PC-3 (cell line): ENCODE measurements at regions of chr17 and their contacts with region 1.

Region 1: DNA sequence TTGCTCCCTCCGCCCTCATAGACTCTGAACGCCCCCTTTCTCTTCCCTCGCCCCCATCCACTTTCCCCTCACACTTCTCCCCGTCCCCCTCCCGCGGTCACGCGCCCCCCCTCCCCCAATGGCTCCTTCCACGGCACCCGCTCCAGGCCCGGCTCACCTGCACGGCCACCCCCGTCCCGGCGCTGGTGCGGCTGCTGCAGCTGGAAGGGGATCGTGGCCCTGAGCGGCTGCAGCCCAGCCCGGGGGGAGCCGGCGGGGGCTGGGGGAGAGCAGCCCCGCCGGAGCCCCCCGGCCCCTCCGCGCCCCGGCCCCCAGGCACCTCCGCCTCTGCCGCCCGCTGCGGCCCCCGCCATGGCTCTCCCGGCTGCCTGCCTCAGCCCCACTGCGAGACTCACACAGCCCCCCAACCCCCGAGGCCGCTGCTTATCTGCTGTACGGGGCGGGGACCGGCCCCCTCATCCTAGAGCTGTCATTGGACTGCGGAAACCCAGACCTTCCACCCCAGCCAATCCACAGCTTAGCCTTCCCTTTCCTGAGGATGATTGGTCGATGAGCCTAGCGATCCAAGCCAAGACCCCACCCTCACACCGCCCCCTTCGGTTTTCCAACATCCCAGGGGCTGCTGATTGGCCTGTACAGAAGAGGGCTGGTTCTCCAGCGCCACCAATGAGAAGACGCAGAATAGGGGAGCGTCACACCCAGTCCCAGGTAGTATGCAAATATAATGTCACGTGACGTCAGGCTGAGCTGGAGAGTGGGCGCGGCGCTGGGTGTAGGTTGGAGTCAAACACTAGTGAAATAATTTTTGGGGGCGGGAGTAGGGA is at the start of gene FAM117A:
- DNase-seq: peak; percentile 100
- ATAC-seq: peak; percentile 96
- H3K4me3 ChIP-seq: peak within 1 kb of the TSS; percentile 76
- H3K27ac ChIP-seq: no peak within 1 kb of the TSS
- H3K4me1 ChIP-seq: peaks cover 24% of the 10 kb centered on the region
- H3K27me3 ChIP-seq: 0 out of 2 replicates have a peak, but pooled peaks cover 6% of the 10 kb centered on the region
- CTCF ChIP-seq: no peak
- total RNA-seq, gene FAM117A: 9.7 and 16.3 TPM in 2 replicates

Region 2: GRCh38 chr17:49414622-49415350 is 349.2 kb before region 1 on chr17 and contains the start of gene PHB1:
- CTCF ChIA-PET with region 1: no interaction called
- POLR2A ChIA-PET with region 1: interaction called, 14 read pairs
- intact Hi-C with region 1: no loop called
- DNase-seq: peak; percentile 100
- ATAC-seq: peak; percentile 99
- H3K4me3 ChIP-seq: peak within 1 kb of the TSS; percentile 89
- H3K27ac ChIP-seq: peak within 1 kb of the TSS; percentile 2; the same call in 1 of the 2 replicates
- H3K4me1 ChIP-seq: peaks cover 14% of the 10 kb centered on the region
- H3K27me3 ChIP-seq: no peaks in the 10 kb centered on the region
- CTCF ChIP-seq: no peak
- total RNA-seq, gene PHB1: 585 and 641 TPM in 2 replicates

Region 3: DNA sequence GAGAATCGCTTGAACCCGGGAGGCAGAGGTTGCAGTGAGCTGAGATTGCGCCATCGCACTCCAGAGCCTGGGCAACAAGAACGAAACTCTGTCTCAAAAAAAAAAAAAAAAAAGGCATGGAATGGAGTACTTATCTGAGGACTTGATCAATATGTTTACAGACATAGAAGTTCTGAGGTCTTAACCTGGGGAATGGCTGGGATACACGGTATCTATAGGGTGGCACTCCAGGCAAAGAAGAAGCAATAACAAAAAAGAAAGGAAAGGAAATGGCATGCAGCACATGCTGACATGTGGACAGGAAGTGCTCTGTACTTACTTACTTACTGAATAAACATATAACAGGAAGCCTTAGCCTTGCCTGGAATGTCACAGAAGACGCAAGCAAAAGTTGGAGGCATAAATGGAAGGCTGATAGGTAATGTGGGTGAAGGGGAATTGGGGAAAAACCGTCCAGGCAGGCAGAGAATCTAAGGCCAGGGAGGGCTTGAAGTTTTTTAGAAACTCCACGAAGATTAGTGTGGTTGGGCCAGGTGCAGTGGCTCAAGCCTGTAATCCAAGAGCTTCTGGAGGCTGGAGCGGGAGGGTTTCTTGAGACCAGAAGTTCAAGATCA is 76.0 kb before region 1 on chr17:
- CTCF ChIA-PET with region 1: no interaction called
- POLR2A ChIA-PET with region 1: no interaction called
- intact Hi-C with region 1: no loop called
- DNase-seq: peak; percentile 49
- ATAC-seq: peak; percentile 88
- H3K4me3 ChIP-seq: no peak overlapping the region
- H3K27ac ChIP-seq: no peak overlapping the region
- H3K4me1 ChIP-seq: peaks cover 5% of the 10 kb centered on the region
- H3K27me3 ChIP-seq: no peaks in the 10 kb centered on the region
- CTCF ChIP-seq: no peak

Region 4: DNA sequence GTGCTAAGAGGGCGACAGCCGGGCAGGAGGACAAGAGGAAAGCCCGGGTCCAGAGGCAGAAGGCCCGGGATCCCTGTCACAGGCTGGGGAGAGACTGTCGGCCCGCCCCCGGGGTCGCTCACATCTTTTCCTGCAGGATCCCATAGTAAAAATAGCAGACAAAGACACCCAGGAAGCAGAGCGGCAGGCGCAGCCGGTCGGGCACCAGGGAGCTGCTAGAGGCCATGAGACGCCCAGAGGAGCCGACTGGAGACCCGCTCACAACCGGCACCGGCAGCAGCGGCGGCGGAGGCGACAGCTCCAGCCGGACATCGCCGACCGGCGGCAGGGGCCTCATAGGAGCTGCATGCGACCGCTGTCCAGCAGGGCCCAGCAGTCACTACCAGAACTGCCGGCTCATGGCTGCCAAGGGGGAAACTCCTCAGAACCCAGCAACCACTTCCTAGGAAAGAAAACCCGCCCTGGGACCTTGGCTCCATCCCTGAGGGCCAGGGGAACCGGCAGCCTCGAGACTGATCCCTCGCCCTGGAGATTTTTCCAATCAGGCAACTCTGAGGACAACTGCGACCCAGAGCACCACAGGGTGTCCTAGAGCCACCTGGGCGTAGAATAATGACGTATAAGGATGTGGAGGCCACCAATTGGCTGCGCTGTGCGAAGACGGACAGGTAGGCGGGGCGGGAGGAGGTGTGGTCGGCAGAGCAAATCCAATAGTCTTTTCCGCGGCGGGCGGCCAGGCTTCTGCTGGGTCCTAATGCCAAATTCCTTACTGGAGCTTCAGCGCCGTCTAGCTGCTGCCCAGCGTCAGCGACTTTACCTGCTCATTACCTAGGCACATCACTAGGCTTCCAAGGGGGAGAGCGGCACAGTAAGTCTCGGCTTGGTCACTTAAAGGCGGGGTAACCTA is 56.1 kb before region 1 on chr17 and contains the start of gene SLC35B1:
- CTCF ChIA-PET with region 1: interaction called, 4 read pairs
- POLR2A ChIA-PET with region 1: no interaction called
- intact Hi-C with region 1: loop called (anchors 1 kb)
- DNase-seq: peak; percentile 100
- ATAC-seq: peak; percentile 91
- H3K4me3 ChIP-seq: peak within 1 kb of the TSS; percentile 86
- H3K27ac ChIP-seq: peak within 1 kb of the TSS; percentile 80
- H3K4me1 ChIP-seq: peaks cover 17% of the 10 kb centered on the region
- H3K27me3 ChIP-seq: no peaks in the 10 kb centered on the region
- CTCF ChIP-seq: peak; percentile 98
- total RNA-seq, gene SLC35B1: 199 and 211 TPM in 2 replicates

Region 5: DNA sequence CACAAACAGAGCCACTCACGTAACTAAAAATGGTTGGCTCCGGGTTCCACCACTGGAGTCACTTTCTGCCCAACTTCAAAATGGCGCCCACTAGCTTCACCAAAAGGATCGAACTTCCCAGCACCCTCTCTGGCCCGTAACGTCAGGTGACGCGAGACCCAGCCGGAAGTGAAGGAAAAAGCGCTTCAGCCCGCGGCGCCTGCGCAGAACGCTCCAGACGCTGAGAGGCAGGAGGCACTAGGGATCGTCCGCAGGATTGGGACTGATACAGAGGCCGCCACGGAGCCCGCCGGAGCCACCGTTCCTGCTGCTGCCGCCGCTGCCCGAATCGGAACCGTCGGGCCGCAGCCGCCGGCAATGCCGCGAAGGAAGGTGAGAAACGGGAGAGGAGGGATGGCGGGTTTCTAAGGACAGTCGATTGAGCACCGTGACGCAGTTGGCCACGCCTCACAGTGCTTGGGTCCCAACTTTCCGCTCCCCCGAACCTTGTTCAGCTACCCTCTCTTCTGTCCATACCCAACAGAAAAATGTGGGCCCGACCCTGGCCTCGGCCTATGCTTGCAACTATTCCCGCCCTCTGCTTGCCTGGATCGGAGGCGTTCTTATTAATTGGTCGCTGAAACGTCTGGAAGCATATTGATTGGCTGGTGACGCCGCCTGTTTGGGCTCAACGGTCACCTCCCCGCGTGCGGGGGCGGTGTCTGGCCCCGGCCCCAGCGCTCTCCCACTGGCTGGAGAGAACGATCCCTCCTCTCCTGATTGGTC is 24.7 kb after region 1 on chr17 and contains the start of gene KAT7:
- CTCF ChIA-PET with region 1: interaction called, 3 read pairs
- POLR2A ChIA-PET with region 1: interaction called, 7 read pairs
- intact Hi-C with region 1: loop called (anchors 1 kb)
- DNase-seq: peak; percentile 100
- ATAC-seq: peak; percentile 92
- H3K4me3 ChIP-seq: peak within 1 kb of the TSS; percentile 84
- H3K27ac ChIP-seq: peak within 1 kb of the TSS; percentile 76
- H3K4me1 ChIP-seq: peaks cover 16% of the 10 kb centered on the region
- H3K27me3 ChIP-seq: no peaks in the 10 kb centered on the region
- CTCF ChIP-seq: no peak
- total RNA-seq, gene KAT7: 39.1 and 45.8 TPM in 2 replicates

Region 6: GRCh38 chr17:49910094-49910857 is 146.3 kb after region 1 on chr17:
- CTCF ChIA-PET with region 1: no interaction called
- POLR2A ChIA-PET with region 1: interaction called, 10 read pairs
- intact Hi-C with region 1: no loop called
- DNase-seq: peak; percentile 79
- ATAC-seq: peak; percentile 52
- H3K4me3 ChIP-seq: no peak overlapping the region
- H3K27ac ChIP-seq: no peak overlapping the region
- H3K4me1 ChIP-seq: peaks cover 30% of the 10 kb centered on the region
- H3K27me3 ChIP-seq: no peaks in the 10 kb centered on the region
- CTCF ChIP-seq: no peak

Region 7: DNA sequence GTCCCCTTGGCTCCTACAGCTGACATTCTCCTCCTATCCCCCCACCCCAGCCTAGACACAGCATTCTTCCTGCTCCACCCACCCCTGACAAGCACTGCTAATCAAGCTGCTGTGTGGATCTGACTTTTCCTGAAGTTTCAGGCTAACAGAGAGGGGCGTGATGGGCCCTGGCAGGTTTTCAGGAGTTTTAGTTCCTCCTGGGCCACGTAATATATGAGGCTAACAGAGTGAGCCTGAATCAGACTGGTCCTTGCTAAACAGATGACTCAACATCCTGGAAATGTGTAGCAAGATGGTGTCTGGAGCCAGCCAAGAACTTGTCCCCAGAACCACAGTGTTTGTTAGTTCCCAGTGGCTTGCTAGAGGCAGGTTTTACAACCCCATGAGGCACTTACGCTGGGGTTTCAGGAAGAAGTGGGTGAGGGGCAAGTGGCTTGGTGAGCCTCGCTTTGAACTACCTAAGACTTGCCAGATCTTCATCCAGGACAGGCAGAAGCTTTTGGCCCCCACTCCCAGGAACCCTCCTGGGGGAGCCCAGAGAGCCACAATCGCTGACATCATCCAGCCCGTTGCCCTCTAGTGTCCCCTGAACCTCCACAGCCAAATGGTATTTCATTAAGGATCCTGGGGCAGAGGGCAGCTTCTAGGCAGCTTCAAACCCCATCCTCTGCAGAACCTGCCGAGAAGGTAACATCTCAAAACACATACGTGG is 526.2 kb after region 1 on chr17:
- CTCF ChIA-PET with region 1: no interaction called
- POLR2A ChIA-PET with region 1: interaction called, 15 read pairs
- intact Hi-C with region 1: no loop called
- DNase-seq: peak; percentile 98
- ATAC-seq: peak; percentile 94
- H3K4me3 ChIP-seq: peak overlapping the region; percentile 50
- H3K27ac ChIP-seq: peak overlapping the region; percentile 92
- H3K4me1 ChIP-seq: peaks cover 35% of the 10 kb centered on the region
- H3K27me3 ChIP-seq: no peaks in the 10 kb centered on the region
- CTCF ChIP-seq: no peak